Mammary epithelial cell (primary cell): ENCODE measurements at regions of chr4 and their contacts with region 1.

Region 1: DNA sequence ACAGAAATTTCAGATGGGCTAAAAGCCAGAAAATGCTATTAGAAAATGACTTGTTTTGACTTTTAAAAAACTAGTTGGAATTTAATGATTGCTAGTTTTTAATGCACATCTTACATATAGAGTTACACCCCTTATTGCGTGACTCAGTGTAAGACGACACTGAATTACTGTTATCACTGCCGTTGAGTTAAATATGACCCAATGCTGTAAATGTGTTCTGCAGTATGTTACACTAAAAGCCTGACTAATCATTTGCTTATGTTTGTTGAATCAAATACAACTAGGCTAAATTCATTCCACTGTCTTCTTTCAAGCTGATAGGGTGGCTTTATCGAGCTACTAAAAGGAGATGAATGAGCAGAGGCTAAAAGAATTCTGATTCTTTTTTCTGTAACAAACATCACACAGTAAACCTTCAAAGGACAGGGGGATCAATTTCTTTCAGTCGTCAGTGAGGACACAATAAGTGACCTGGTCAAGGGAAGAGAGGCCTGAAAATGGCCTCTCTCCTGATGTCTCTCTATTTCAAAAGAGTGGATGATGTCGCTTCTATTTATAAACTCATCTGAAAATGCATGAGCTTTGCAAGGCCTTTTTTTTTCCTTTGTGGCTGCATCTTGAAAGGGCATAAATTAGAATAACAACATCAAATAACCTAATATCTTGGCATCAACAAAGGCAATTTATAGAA is 142.2 kb upstream of the KCNIP4 start:
- DNase-seq: no peak
- H3K4me3 ChIP-seq: no peak overlapping the region
- H3K27ac ChIP-seq: no peak overlapping the region
- H3K4me1 ChIP-seq: no peaks in the 10 kb centered on the region
- H3K27me3 ChIP-seq: no peaks in the 10 kb centered on the region
- CTCF ChIP-seq: no peak

Region 2: GRCh38 chr4:22071749-22072148 is 19.1 kb before region 1 on chr4:
- CTCF ChIA-PET with region 1: no interaction called
- dilution Hi-C with region 1: no loop called
- in situ Hi-C with region 1: no loop called
- intact Hi-C with region 1: loop called (anchors 2 kb)
- DNase-seq: peak; percentile 93
- H3K4me3 ChIP-seq: no peak overlapping the region
- H3K27ac ChIP-seq: peak overlapping the region; percentile 43
- H3K4me1 ChIP-seq: peaks cover 8% of the 10 kb centered on the region
- H3K27me3 ChIP-seq: peaks cover 1% of the 10 kb centered on the region
- CTCF ChIP-seq: no peak

Region 3: GRCh38 chr4:22190855-22191254 is 100.0 kb after region 1 on chr4:
- CTCF ChIA-PET with region 1: no interaction called
- dilution Hi-C with region 1: no loop called
- in situ Hi-C with region 1: no loop called
- intact Hi-C with region 1: no loop called
- DNase-seq: peak; percentile 90
- H3K4me3 ChIP-seq: no peak overlapping the region
- H3K27ac ChIP-seq: no peak overlapping the region
- H3K4me1 ChIP-seq: peaks cover 22% of the 10 kb centered on the region
- H3K27me3 ChIP-seq: no peaks in the 10 kb centered on the region
- CTCF ChIP-seq: no peak